Posterior vena cava (tissue), 2 donors: ENCODE measurements at regions of chr2 and their contacts with region 1.

Region 1: DNA sequence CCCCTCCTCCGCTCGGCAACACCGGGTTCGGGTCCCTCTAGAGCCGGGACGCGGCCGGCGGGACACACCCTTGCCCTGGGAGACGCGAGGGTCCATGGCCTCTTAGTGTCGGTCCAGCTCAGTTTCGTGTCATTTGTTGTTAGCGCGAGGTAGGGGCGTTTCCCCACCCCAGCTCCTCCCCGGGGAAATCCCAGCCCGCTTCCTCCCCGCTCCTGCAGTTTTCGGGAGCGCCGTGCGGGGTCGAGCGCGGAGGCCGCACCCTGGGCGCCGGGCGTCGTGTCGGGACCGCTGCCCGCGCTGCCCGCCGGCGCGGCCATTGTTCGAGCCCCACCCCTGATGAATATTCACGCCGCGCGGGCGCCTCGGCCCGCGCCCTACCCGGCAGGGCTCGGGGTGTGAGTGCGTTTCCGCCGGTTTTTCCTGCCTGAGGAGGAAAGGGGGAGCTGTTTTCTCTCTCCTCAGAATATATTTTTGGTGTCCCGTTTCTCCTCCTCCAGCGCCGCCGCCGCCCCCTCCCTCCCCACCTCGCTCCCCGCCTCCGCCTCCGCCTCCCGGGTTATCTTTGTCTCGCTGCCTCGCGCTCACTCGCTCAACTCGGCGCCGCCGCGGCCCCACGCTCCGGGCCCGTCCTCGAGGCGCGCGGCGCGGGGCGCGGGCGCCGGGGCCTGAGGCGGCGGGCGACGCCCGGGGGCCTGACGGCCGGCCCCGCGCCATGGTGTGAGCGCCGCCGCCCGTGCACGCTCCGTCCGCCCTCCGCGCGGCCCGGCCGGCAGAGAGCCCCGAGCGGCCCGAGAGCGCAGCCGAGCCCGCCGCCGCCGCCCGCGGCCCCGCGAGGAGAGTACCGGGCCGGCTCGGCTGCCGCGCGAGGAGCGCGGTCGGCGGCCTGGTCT is at the start of gene MAP4K4:
- DNase-seq: peak; percentile 95
- total RNA-seq, gene MAP4K4: 53.5 to 75.8 TPM

Region 2: DNA sequence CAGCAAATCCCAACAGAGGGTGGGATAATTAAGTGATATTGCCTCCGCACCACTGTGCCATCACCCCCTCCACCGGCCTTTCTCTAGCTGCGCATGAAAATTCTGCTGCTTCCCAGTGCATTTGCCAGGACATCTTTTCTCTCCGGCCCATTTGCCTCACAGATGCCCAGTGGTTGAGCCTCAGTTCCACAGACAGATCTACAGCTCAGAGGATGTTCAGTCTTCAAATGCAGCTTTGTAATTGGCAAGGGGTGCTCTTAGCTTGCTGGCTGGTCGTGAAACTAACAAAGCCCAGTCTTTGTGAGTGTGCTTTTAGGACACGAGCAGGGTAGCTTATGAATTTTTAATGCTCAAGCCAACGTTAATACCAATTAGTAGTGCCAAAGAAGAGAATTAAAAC is 1954.2 kb before region 1 on chr2:
- intact Hi-C with region 1: no loop called
- DNase-seq: no peak

Region 3: GRCh38 chr2:102033031-102033749 is 335.8 kb after region 1 on chr2:
- intact Hi-C with region 1: loop called in 1 of 2 experiments (anchors 10 kb)
- DNase-seq: no peak